Activated T-helper 1 cell treated with anti-CD3 and anti-CD28 coated beads, Interleukin-12 subunit alpha, Interleukin-12 subunit beta, Interleukin-2, Interleukin-4 antibody, amounts not matched to agents 30 ng/mL and 10 ng/mL and 1 ng/mL, durations not matched to agents 14 hours and 24 hours and 36 hours (primary cell): ENCODE measurements at regions of chr21 and their contacts with region 1.

Region 1: DNA sequence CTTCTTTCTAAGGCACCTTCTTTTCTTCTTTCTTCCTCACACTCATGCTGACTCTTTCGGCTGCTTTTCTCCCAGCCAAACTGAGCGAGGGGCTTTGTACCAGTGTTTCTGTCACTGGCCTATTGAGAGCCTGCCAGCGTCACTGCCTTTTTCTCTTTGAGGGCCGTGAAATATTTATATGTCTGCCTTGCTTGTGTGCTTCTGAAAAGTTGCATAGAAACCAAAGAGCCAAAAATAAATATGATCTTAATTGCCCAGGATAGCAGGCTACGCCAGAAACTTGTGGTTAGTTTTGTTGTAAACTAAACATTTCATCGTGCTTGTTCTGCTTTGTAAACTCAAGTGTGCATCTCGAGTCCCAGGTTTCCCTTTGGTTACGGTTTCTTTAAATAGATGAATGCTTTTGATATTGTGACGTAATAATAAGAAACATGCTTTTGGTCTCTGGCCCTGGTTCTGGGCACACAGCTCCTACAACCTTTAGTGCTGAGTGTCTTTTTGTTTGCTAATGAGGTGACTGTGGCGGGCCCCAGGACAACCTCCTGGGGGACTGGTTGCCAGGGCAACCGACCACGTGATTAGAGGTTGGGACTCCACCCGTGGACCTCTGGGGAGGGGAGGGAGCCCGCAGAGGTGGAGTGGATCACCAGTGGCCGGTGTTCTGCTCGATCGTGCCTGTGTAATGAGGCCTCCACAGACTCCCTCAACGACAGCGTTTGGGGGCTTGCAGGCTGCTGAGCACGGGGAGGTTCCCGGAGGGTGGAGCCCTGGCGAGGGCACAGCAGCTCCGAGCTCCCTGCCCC is 10.9 kb downstream of the SLC37A1 start:
- DNase-seq: no peak
- H3K4me3 Mint-ChIP-seq: no peak overlapping the region
- H3K27ac Mint-ChIP-seq: no peak overlapping the region
- H3K4me1 Mint-ChIP-seq: peaks cover 49% of the 10 kb centered on the region
- H3K27me3 Mint-ChIP-seq: peaks cover 2% of the 10 kb centered on the region

Region 2: GRCh38 chr21:42337830-42338728 is 186.5 kb before region 1 on chr21:
- intact Hi-C with region 1: loop called (anchors 5 kb)
- DNase-seq: peak; percentile 66
- H3K4me3 Mint-ChIP-seq: no peak overlapping the region
- H3K27ac Mint-ChIP-seq: peak overlapping the region; percentile 15
- H3K4me1 Mint-ChIP-seq: peaks cover 12% of the 10 kb centered on the region
- H3K27me3 Mint-ChIP-seq: peaks cover 28% of the 10 kb centered on the region

Region 3: DNA sequence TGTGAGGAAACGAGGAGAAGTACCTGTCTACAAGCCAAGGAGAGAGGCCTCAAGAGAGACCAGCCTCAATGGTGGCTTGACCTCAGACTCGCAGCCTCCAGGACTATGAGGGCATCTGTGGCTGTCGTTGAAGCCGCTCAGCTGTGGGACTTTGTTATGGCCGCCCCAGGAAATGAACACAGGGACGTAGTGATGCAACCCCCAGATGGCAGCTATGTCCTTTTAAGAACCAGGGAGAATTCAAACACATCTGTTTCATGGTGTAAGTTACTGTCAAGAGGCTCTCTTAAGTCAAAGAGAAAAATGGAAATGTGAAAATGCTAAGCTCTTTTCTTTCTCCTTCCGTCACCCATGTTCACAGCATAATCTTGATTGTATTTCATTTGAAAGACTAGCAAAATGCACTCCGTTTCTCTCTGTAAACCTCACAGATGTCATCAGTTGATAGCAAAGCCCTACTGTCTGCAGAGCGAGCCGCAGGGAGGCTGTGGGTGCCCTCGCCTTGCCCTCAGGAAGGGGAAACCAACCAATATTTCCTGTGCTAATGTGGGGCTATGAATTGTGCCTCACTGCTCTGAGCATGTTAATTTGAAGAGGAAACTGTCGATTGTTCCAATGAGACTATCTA is 99.5 kb before region 1 on chr21:
- intact Hi-C with region 1: loop called (anchors 5 kb)
- DNase-seq: peak; percentile 74
- H3K4me3 Mint-ChIP-seq: peak overlapping the region; percentile 76
- H3K27ac Mint-ChIP-seq: peak overlapping the region; percentile 95
- H3K4me1 Mint-ChIP-seq: peaks cover 67% of the 10 kb centered on the region
- H3K27me3 Mint-ChIP-seq: no peaks in the 10 kb centered on the region

Region 4: GRCh38 chr21:42474043-42474831 is 50.3 kb before region 1 on chr21:
- intact Hi-C with region 1: no loop called
- DNase-seq: no peak
- H3K4me3 Mint-ChIP-seq: no peak overlapping the region
- H3K27ac Mint-ChIP-seq: no peak overlapping the region
- H3K4me1 Mint-ChIP-seq: no peaks in the 10 kb centered on the region
- H3K27me3 Mint-ChIP-seq: peaks cover 3% of the 10 kb centered on the region

Region 5: GRCh38 chr21:42684109-42684916 is 159.8 kb after region 1 on chr21:
- intact Hi-C with region 1: loop called (anchors 1 kb)
- DNase-seq: peak; percentile 48
- H3K4me3 Mint-ChIP-seq: peak overlapping the region; percentile 79
- H3K27ac Mint-ChIP-seq: peak overlapping the region; percentile 97
- H3K4me1 Mint-ChIP-seq: peaks cover 43% of the 10 kb centered on the region
- H3K27me3 Mint-ChIP-seq: no peaks in the 10 kb centered on the region